Activated T-helper 2 cell treated with anti-CD3 and anti-CD28 coated beads, Interferon-gamma antibody, Interleukin-2, Interleukin-4, amounts not matched to agents 10 μg/mL and 5 μg/mL and 100 μg/mL, durations not matched to agents 14 hours and 24 hours and 36 hours (primary cell): ENCODE measurements at regions of chr16 and their contacts with region 1.

Region 1: DNA sequence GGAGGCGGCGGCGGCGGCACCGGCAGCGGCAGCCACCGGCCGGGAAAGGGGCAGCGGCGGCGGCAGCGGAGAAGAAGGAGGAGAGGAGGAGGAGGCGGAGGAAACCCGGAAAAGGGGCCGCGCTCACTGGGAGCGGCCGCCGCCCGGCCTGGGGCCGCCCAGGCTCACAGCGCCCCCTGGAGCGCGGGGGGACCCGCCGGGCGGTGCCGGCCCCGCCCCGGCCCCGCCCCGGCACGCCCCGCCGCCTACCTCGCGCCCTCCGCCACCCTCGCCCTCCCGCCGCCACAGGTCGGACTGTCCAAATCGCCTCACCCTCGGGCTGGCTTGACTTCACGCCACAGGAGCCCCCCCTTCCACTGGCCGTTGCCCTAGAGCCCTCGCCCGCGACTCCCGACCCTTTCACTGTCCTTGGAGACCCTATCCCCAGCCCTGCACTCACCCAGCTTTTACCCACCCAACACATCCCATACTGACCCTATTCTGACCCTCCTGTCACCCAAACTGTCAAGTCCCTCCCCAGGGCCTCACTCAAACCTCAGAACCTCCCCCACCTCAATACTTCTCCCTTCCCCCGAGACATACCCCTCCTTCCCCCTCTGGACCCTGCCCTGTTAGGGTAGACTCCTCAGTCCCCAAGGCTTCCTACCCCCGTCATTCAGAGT is at the start of gene CSNK2A2:
- DNase-seq: peak; percentile 63
- H3K4me3 Mint-ChIP-seq: peak within 1 kb of the TSS; percentile 84
- H3K27ac Mint-ChIP-seq: peak within 1 kb of the TSS; percentile 54
- H3K4me1 Mint-ChIP-seq: peaks cover 34% of the 10 kb centered on the region
- H3K27me3 Mint-ChIP-seq: peaks cover 12% of the 10 kb centered on the region
- total RNA-seq, gene CSNK2A2: 90.5 and 93.9 TPM in 2 replicates

Region 2: DNA sequence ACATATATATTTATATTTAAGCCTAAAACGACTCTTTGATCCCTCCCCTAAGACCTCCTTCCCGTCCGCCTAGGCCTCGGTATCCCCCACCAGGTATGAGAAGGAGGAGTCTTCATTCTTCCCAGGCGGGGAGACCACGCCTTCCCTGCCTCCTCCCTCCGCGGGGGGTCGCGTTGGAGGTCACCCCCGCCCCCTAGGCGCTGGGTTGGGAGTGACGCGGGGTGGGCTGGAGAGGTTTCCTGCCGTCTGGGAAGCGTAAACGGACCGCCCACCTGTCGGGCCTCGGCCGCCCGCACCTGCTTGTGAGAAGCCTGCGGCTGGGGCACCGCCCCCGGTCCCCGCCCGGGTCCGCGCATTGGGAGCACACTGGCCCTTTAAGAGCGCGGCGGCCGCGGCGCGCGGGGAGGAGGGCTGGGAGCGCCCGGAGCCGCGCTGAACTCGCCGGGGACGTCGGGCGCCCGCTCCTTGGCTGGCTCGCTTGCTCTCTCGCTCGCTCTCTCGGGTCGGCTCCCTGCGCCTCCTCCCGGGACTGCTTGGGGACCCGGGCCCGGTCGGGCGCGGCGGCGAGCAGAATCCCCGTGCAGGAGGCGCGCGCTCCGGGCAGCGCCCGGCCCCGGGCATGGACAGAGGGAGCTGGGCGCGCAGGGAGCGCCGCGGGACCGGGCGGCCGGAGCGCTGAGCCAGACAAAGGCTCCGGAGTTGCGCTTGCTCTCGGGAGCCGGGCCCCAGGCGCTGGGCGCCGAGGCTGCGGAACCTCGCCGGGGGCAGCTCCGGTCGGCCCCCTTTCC is 172.6 kb before region 1 on chr16 and contains the start of gene MMP15:
- intact Hi-C with region 1: loop called (anchors 10 kb)
- DNase-seq: peak; percentile 48
- H3K4me3 Mint-ChIP-seq: peak within 1 kb of the TSS; percentile 85
- H3K27ac Mint-ChIP-seq: peak within 1 kb of the TSS; percentile 72
- H3K4me1 Mint-ChIP-seq: peaks cover 10% of the 10 kb centered on the region
- H3K27me3 Mint-ChIP-seq: peaks cover 21% of the 10 kb centered on the region
- total RNA-seq, gene MMP15: 1.3 and 1.9 TPM in 2 replicates

Region 3: DNA sequence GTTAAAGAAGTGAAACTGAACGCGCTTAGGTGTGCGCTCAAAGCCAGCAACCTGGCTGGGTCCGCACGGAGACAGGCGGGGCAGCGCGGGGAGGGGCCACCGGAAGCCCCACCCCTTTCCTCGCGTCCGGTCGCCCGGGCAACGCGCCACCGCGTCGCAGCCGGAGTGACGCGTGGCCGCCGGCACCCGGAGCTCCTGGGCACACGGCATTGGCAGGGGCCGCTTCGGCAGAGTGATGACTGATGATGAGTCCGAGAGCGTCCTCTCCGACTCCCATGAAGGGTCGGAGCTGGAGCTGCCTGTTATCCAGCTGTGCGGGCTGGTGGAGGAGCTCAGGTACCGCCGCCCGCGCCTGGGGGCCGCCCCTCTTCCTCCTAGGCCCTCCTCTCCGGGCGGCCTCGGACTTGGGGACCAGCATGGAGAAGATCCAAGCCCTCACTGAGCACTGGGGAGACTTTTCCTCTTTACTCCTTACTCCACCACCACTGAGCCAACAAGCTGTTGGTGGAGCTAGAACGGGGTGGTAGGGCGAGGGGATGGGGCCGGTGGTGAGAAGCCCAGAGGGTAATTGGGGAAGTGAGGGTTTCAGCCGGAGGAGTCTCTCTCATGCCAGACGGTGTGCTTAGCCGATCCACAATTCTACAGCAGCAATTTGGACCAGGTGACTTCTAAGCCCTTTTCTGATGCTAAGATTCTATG is 51.8 kb after region 1 on chr16:
- intact Hi-C with region 1: loop called (anchors 5 kb)
- DNase-seq: peak; percentile 83
- H3K4me3 Mint-ChIP-seq: peak overlapping the region; percentile 86
- H3K27ac Mint-ChIP-seq: peak overlapping the region; percentile 76
- H3K4me1 Mint-ChIP-seq: peaks cover 7% of the 10 kb centered on the region
- H3K27me3 Mint-ChIP-seq: peaks cover 4% of the 10 kb centered on the region